ENCODE measurements at regions of chrX and their contacts with region 1.

Region 1: DNA sequence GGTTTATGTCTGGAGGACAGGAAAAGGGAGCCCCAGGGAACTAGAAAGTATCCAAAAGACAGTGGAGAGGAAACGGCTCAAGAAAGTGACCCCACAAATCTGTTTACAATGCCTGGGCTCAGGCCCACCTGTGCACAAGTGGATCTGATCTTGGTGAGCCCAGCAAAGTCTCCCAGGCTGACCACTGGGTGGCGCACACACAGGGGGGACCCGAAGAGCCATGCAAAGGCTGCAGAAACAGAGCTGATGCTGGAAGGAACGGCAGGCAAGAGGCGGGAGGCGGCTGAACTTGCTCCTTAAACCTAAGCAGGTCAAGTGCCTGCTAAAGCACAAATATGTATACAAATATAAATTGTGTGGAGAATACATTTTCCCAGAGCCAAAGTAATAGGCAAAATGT is 9.5 kb downstream of the HAUS7 start:
- DNase-seq: peak; percentile 39
- ATAC-seq: peak; percentile 66
- H3K4me3 ChIP-seq: no peak overlapping the region
- H3K27ac ChIP-seq: no peak overlapping the region
- H3K4me1 ChIP-seq: no peaks in the 10 kb centered on the region; the same call in 1 of the 2 replicates
- H3K27me3 ChIP-seq: no peaks in the 10 kb centered on the region
- CTCF ChIP-seq: peak; percentile 45
- POLR2A ChIP-seq: no peak
- RAD21 ChIP-seq: peak; percentile 28

Region 2: DNA sequence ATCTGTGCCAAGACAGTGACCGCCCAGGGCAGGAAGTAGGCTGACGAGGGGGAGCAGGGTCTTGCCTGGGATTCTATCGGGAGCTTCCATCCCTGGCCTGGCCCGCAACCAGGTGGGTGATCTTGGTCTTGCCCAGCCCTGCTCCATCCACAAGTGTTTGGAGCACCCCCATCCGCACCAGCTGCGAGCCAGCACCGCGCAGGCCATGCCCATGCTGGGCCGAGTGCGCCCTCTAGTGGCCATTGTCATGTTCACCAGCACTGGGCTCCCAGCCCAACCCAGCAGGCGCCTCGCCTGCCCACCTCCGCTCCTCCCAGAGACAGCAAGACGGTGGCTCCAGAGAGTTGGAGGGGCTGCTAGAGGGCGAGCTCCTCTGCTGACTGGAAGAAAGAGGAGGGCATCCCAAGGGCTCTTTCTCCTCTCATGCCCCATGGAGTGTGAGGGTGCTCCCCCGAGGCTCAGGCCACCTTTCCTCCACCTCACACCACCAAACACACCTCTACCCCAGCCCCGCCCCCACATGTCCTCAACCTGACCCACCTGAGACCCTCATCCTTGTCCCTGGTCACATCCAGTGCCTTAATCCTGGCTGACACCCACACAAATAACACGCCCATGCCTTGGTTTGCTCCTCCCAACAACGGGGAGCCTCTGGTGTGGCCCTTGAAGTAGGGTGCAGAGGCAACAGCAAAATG is 46.8 kb after region 1 on chrX:
- CTCF ChIA-PET with region 1: interaction called, 7 read pairs
- POLR2A ChIA-PET with region 1: no interaction called
- dilution Hi-C with region 1: no loop called
- in situ Hi-C with region 1: no loop called
- intact Hi-C with region 1: loop called (anchors 2 kb)
- DNase-seq: peak; percentile 58
- ATAC-seq: peak; percentile 89
- H3K4me3 ChIP-seq: no peak overlapping the region
- H3K27ac ChIP-seq: no peak overlapping the region
- H3K4me1 ChIP-seq: no peaks in the 10 kb centered on the region
- H3K27me3 ChIP-seq: no peaks in the 10 kb centered on the region
- CTCF ChIP-seq: peak; percentile 87
- POLR2A ChIP-seq: no peak
- RAD21 ChIP-seq: peak; percentile 89

Measured in IMR-90 (cell line).